Activated B cell treated with CpG ODN at 0.5 μM for 24 hours (primary cell): ENCODE measurements at regions of chr12 and their contacts with region 1.

Region 1: DNA sequence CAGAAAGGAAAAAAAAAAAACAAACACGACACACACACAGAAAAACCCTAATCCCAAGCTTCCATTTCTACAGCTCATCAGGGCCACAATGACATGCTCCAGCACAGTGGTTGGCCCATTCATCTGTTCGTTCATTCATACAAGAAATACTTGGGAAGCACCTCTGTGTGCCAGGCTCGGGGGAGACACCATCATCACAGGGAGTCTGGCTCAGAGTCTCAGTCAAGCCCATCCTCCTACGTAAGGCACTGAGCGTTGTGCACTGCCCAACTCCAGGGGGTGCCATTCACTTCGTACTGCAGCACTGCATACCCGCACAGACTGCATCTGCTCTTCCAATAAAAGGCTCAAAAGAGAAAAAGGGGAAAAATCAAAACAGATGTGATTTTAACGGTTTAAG is 15.3 kb downstream of the VPS37B start:
- DNase-seq: no peak
- ATAC-seq: peak; percentile 70
- H3K4me3 Mint-ChIP-seq: peak overlapping the region; percentile 26
- H3K27ac Mint-ChIP-seq: peak overlapping the region; percentile 32
- H3K4me1 Mint-ChIP-seq: peaks cover 94% of the 10 kb centered on the region
- H3K27me3 Mint-ChIP-seq: no peaks in the 10 kb centered on the region
- CTCF ChIP-seq: no peak

Region 2: DNA sequence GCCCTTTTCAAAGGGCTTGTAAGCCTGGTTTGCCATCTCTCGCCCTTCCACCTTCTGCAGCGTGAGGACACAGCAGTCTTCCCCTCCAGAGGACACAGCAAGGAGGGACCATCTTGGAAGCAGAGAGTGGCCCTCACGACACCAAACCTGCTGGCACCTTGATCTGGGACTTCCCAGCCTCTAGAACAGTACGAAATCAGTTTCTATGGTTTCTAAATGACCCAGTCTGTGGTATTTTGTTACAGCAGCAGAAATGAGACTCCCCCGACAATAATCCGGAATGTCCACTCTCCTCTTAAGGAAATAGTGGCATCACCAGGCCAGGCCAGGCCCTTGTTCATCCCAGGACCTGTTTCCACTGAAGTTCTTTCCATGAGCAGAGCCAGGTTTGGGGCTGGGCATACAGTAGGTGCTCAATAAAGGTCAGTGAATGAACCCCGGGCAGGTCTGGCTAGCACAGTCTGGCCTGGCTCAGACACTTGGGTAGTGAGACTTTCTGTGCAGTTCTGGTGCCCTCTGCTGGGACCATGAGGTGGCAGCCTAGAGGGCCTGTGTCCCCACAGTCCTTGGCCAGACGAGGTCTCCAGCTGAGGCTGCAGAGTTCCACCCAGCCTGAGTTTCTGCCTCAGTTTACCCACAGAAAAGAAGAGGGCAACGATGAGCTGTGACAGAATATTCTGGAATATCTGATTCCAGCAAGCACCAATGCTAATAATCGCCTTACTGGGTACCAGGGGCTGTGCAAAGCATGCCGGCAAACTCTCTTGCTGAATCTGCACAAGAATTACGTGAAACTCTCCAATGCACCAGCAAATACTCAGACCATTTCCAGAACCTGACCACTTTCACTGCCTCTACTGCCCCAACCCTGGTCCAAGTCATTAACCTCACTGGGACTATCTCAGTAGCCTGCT is 71.6 kb after region 1 on chr12:
- CTCF ChIA-PET with region 1: interaction called, 25 read pairs
- POLR2A ChIA-PET with region 1: interaction called, 7 read pairs
- intact Hi-C with region 1: loop called (anchors 1 kb)
- DNase-seq: peak; percentile 60
- ATAC-seq: peak; percentile 96
- H3K4me3 Mint-ChIP-seq: no peak overlapping the region
- H3K27ac Mint-ChIP-seq: peak overlapping the region; percentile 18
- H3K4me1 Mint-ChIP-seq: peaks cover 24% of the 10 kb centered on the region
- H3K27me3 Mint-ChIP-seq: no peaks in the 10 kb centered on the region
- CTCF ChIP-seq: peak; percentile 79